ENCODE measurements at regions of chr7 and their contacts with region 1.

Region 1: GRCh38 chr7:134943764-134944400 is 42.4 kb upstream of the AGBL3 start:
- DNase-seq: no peak
- ATAC-seq: peak; percentile 45

Region 2: DNA sequence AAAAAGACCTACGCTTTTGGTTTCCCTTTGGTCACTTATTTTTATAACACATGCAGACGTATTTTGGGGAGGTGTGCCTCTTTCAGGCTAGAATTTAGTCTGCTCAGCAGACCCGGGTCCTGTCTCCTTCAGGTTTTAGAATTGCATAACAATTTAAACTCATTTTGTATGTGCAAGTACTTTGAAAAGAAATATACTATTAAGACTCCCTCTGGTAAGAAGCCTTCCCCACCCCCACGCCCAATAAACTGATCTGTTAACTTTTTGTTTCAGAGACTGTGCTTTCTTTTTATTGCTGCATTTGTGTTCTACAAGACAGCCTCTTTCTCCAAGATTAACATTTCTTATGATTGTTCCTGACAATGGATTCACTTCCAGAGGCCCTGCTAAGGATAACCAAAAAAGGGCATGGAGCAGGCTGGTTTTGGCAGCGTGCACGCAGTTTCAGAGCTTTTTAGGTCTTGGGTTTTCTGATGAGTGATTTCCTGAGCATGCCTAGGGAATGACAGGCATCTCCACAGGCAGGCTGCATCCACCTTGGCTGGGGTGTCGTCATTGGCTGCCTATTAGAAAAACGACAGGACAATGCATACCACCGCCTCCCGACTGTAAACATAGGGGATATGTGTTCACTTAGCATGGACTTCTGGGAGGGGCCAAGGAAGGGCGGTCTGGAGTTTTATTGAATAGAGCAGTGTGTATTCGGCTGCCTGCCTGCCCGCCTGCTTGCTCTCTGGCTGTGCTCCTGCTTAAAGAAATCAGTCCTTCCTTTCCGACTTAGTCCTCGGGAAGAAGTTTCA is 164.7 kb before region 1 on chr7 and contains the start of gene CALD1:
- intact Hi-C with region 1: loop called (anchors 10 kb)
- DNase-seq: peak; percentile 74
- ATAC-seq: peak; percentile 94
- total RNA-seq, gene CALD1: 118 TPM

Region 3: DNA sequence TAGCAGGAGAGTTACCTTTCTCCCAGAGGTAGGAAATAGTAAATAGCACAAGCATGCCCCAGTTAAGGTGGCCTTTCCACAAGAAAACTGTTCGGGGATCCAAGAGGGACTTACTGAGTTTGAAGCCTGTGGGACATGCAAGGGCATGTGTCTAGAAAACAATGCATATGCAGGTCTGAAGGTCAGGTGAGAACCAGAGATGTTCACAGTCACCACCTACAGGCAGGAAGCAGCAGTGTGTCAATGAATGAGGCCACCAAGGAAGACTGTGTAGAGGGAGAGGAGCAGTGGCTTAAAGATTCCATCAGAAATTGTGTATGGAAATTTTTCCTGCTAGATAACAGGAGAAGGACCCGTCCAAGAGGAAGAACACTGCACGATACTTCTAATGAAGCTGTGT is 98.4 kb before region 1 on chr7:
- intact Hi-C with region 1: no loop called
- DNase-seq: no peak
- ATAC-seq: peak; percentile 28

Region 4: DNA sequence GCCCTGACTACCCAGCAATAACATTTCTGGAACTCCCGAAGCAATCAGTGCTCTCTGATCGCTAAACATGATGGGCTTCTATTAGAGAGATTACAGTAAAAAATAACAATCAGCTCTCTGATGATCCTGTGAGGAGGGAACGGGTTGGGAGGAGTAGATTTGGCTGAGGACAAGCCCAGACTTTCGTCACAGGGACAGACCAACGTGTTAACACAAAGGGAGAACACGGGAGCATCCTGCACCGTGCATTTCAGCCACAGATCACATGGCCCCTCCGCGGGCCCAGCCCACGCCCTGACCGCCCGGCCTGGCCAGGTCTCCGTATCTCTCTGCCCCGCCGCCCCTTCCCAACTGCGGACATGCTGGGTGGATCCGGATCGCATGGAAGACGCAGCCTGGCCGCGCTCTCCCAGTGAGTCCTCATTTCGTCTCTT is 52.6 kb before region 1 on chr7:
- intact Hi-C with region 1: loop called (anchors 10 kb)
- DNase-seq: peak; percentile 87
- ATAC-seq: peak; percentile 85

Region 5: DNA sequence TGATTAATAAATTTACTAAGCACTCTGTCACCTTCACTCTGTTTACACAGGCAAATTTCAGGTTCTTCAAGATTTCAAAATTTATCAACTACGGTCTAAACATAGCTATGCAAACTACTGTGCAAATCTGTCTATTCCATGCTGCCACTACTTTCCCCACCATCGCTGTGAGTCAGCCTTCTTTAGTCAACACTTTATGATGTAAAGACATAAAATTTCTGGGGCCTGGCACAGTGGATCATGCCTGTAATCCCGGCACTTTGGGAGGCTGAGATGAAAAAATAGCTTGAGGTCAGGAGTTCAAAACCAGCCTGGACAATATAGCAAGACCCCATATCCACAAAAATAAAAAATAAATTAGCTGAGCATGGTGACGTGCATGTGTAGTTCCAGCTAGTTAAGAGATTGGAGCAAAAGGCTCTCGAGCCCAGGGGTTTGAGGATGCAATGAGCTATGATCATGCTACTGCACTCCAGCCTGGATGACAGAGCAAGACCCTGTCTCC is 523.4 kb after region 1 on chr7:
- intact Hi-C with region 1: no loop called
- DNase-seq: no peak
- ATAC-seq: no peak